Gastrocnemius medialis (tissue), 4 donors: ENCODE measurements at regions of chr12 and their contacts with region 1.

Region 1: GRCh38 chr12:52023182-52023975 is 16.6 kb downstream of the TAMALIN start:
- DNase-seq: peak; percentile 74 to 77
- ATAC-seq: peak in 1 of 2 donors; percentile 24
- H3K4me3 ChIP-seq: peak overlapping the region; percentile 64 to 78 (median 74)
- H3K27ac ChIP-seq: peak overlapping the region in 3 of 4 donors; percentile 44 to 58 (median 44)
- H3K4me1 ChIP-seq: peaks cover 36 to 46% of the 10 kb centered on the region in 2 donors
- H3K27me3 ChIP-seq: no peaks in the 10 kb centered on the region
- CTCF ChIP-seq: peak in 4 of 5 experiments; percentile 97 to 99 (median 98)
- POLR2A ChIP-seq: no peak

Region 2: DNA sequence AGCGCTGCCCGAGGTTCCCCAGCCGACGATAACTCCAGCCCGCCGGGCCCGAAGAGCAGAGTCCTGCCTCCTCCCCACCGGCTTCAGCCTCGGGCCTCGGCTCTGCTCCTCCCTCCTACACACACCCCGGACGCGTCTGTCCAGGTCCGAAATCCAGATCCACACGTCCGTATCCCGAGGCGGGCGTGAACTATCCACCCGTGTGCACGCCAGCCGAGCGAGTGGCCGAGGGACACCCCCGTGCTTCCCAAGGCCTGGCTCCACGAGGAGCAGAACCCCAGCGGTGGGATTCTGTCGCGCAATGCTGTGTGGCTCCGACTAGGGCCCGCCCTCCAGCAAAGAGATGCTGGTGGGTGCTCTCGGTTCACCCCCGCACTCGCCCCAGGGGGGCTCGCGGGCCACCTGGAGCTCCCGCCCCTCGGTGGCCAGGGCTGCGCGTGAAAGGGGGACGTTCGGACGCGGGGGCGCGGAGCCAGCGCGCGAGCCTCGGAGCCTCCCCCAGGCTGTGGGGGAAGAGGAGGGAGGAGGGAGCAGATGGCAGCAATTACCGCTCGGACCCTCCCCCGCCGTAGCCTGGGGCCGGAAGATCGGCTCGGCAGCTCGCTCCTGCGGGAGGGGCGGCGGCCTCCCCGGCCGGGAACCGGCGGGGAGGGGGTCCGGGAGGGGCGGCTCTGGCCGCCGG is 154.4 kb before region 1 on chr12:
- in situ Hi-C with region 1: no loop called
- intact Hi-C with region 1: no loop called
- DNase-seq: no peak
- ATAC-seq: no peak
- H3K4me3 ChIP-seq: peak overlapping the region; percentile 42 to 65 (median 50)
- H3K27ac ChIP-seq: no peak overlapping the region
- H3K4me1 ChIP-seq: peaks cover 0 to 13% of the 10 kb centered on the region in 2 donors
- H3K27me3 ChIP-seq: peaks cover 10 to 28% (median 16%) of the 10 kb centered on the region in 3 donors
- CTCF ChIP-seq: no peak
- POLR2A ChIP-seq: no peak

Region 3: GRCh38 chr12:51951843-51952722 is 71.3 kb before region 1 on chr12:
- in situ Hi-C with region 1: no loop called
- intact Hi-C with region 1: loop called (anchors 2 kb)
- DNase-seq: peak; percentile 24 to 55
- ATAC-seq: peak; percentile 44 to 50
- H3K4me3 ChIP-seq: peak overlapping the region; percentile 65 to 97 (median 91)
- H3K27ac ChIP-seq: peak overlapping the region; percentile 89 to 98 (median 96)
- H3K4me1 ChIP-seq: peaks cover 52% of the 10 kb centered on the region in 2 donors
- H3K27me3 ChIP-seq: no peaks in the 10 kb centered on the region
- CTCF ChIP-seq: no peak
- POLR2A ChIP-seq: peak in 1 of 2 donors; percentile 25

Region 4: DNA sequence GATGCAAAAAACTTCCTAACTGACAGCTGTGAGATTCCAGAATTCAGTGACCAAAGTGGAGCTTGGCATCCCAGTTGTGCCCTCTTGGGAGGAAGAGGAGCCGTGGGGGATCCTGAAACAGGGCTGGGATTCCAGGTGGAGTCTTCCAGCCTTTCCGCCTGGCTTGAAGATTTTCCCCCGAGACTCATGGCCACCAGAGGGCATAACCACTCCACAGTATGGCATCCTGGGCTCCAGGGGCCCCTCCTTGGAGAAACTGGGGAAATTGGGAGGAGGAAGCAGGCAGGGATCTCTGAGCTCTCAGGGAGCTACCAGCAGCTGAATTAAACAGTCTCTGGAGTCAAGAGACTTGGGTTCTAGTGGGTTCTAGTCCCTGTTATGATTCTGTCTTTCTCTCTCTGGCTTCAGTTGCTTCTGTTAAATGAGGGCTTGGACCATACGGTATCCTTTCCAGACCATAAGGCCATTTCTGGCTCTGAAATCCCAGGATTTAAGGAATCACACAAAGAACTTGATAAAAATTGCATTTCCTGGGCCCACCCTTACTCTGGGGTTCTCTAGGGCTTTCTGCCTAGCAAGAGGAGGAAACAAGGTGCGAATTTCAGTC is 19.2 kb before region 1 on chr12:
- in situ Hi-C with region 1: no loop called
- intact Hi-C with region 1: loop called (anchors 1 kb)
- DNase-seq: peak in 1 of 2 donors; percentile 39
- ATAC-seq: peak in 1 of 2 donors; percentile 40
- H3K4me3 ChIP-seq: no peak overlapping the region
- H3K27ac ChIP-seq: no peak overlapping the region
- H3K4me1 ChIP-seq: peaks cover 0 to 4% of the 10 kb centered on the region in 2 donors
- H3K27me3 ChIP-seq: peaks cover 2 to 19% (median 19%) of the 10 kb centered on the region in 3 donors
- CTCF ChIP-seq: peak; percentile 47 to 77 (median 72)
- POLR2A ChIP-seq: no peak

Region 5: DNA sequence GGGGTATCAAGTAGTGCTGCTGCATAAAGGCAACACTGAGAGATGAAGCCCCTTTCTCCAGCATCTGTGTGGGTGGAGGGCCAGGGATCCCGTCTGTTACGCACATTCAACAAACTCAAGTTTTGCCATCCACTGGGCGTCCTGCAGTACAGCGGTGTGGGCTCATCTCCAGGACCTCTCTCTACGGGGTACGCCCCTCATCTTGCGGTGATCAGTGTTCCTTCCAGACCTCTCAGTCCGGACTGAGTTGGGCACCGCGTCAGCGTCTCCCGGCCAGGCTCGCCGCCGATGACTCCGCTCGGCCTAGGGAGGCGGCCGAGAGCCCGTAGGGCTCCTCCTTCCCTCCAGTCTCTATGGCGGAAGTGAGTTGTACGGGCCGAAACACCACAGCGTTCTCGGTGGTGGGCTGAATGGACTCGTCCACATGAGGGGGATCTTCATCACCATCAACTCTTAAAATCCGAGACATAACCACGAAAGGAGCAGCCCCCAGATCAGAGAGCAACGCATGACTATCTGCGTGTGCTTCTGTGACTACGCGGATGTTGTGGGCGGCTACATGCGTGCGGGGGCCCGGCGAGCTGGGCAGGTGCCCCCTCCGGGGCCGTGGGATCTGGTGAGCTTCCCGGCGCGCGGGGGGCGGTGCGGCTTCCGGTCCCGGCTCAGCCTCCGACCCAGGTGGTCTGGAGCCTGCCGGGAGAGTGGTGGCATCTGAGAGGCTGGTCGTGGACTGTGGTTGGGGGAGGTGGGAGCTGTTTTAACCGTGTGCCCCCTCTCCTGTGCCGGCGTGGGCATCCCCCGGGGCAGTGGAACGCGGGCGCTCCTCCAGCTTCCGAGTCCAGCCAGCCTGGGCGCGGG is 46.2 kb after region 1 on chr12 and contains the start of gene ATG101:
- in situ Hi-C with region 1: no loop called
- intact Hi-C with region 1: loop called (anchors 1 kb)
- DNase-seq: peak; percentile 90 to 91
- ATAC-seq: peak; percentile 98 to 99
- H3K4me3 ChIP-seq: peak within 1 kb of the TSS; percentile 84 to 97 (median 96)
- H3K27ac ChIP-seq: peak within 1 kb of the TSS; percentile 89 to 96 (median 93)
- H3K4me1 ChIP-seq: peaks cover 26 to 30% of the 10 kb centered on the region in 2 donors
- H3K27me3 ChIP-seq: no peaks in the 10 kb centered on the region
- CTCF ChIP-seq: peak; percentile 45 to 70 (median 56)
- POLR2A ChIP-seq: peak; percentile 83 to 91
- total RNA-seq, gene ATG101: 23.3 to 49.4 (median 37.3) TPM

Region 6: DNA sequence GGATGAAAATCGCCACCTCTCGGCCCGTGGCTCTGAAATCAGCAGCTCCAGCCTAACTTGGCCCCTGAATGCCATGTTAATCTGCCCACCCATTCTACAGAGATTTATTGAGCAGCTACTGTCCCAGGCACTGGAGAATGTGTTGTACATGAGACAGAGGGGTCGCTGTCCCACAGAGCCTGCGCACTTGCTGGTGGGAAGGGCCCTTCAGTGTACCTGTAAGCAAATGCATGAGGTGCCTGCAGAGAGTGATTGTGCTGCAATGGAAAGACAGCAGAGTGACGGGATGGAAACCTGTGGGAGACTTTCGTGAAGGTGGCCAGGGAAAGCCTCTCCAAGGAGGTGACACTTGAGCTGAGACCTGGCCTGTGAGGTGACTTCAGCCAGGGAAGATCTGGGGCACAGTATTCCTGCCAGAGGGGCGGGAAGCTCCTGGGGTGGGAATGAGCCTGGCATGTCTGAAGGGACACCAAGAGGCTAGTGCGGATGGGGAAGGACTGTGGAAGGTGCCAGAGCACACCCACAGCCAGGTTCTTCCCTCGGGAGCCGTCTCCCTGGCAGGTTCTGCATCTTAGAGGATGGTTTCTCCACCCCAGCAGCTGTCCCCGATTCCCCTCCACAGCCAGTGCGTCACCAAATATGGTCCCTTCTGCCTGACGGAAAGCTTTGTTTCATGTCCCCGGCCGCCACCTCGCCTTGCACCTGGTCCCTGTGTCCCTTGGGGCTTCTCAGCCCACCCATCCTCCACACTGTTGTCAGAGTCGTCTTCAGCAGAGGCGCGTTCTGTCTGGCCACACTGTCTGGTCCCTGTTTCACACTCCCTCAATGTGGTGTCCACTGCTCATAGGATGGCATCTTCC is 64.8 kb after region 1 on chr12:
- in situ Hi-C with region 1: loop called (anchors 5 to 10 kb)
- intact Hi-C with region 1: loop called (anchors 1 kb)
- DNase-seq: peak in 1 of 2 donors; percentile 73
- ATAC-seq: peak; percentile 26 to 50
- H3K4me3 ChIP-seq: no peak overlapping the region
- H3K27ac ChIP-seq: peak overlapping the region; percentile 74 to 84 (median 81)
- H3K4me1 ChIP-seq: peaks cover 33 to 42% of the 10 kb centered on the region in 2 donors
- H3K27me3 ChIP-seq: peaks cover 0 to 4% (median 0%) of the 10 kb centered on the region in 3 donors
- CTCF ChIP-seq: no peak
- POLR2A ChIP-seq: no peak